Dorsolateral prefrontal cortex (tissue), 120 donors: ENCODE measurements at regions of chr11 and their contacts with region 1.

Region 1: GRCh38 chr11:4607781-4608666 is at the start of gene TRIM68:
- DNase-seq: peak; percentile 93 to 99 (median 96)
- H3K4me3 ChIP-seq: peak within 1 kb of the TSS; percentile 52 to 94 (median 83)
- H3K27ac ChIP-seq: peak within 1 kb of the TSS; percentile 22 to 93 (median 84)
- H3K27me3 ChIP-seq: no peaks in the 10 kb centered on the region
- CTCF ChIP-seq: peak in 36 of 56 donors; percentile 11 to 61 (median 32)
- total RNA-seq, gene TRIM68: 10.8 to 22.9 (median 16.2) TPM

Region 2: DNA sequence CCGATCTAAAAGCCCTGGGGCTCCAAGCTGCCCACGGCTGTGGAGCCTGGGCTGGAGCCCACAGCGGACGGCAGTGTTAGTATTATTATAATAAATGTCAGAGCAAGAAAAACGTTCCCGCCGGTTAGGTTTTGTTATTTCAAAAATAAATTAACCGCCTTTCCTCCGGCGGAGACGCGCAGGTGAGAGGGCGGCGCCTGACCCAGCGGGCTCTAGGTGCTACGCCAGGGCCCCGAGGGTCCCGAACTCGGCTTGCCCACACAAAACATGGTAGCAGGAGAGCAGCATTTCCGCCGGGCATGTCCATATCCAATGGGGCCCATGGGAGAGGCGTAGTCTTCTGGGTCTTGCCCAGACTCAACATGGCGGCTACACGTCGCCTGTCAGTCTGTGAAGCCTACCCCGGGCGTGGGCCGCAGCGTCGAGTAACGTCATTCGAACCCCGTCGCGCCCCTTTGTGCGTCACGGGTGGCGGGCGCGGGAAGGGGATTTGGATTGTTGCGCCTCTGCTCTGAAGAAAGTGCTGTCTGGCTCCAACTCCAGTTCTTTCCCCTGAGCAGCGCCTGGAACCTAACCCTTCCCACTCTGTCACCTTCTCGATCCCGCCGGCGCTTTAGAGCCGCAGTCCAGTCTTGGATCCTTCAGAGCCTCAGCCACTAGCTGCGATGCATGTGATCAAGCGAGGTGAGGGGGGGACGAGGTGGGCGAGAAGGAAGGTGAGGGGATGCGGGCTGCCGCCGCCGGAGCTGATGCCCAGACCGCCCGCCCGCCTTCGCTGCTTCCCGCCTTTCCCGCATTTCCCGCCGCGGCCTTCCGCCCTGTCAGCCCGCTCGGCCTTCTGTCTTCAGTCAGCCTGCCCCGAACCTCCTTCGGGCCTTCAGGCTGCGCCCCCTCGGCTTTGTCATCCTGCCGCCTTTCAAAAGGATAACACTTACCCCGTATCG is 513.4 kb before region 1 on chr11 and contains the start of gene RRM1:
- intact Hi-C with region 1: loop called in 1 of 2 experiments (anchors 5 kb)
- DNase-seq: peak; percentile 91 to 98 (median 96)
- H3K4me3 ChIP-seq: peak within 1 kb of the TSS; percentile 56 to 99 (median 92)
- H3K27ac ChIP-seq: peak within 1 kb of the TSS; percentile 61 to 98 (median 93)
- H3K27me3 ChIP-seq: no peaks in the 10 kb centered on the region
- CTCF ChIP-seq: peak in 32 of 56 donors; percentile 6 to 57 (median 30)
- total RNA-seq, gene RRM1: 19.3 to 43.3 (median 30.8) TPM